ENCODE measurements at regions of chr6 and their contacts with region 1.

Region 1: GRCh38 chr6:25490018-25490801 is 161.8 kb upstream of the SCGN start:
- DNase-seq: peak; percentile 92
- ATAC-seq: peak; percentile 97
- H3K4me3 ChIP-seq: no peak overlapping the region
- H3K27ac ChIP-seq: no peak overlapping the region
- H3K4me1 ChIP-seq: peaks cover 4% of the 10 kb centered on the region; the same call in 1 of the 2 replicates
- H3K27me3 ChIP-seq: no peaks in the 10 kb centered on the region
- CTCF ChIP-seq: peak; percentile 90

Region 2: DNA sequence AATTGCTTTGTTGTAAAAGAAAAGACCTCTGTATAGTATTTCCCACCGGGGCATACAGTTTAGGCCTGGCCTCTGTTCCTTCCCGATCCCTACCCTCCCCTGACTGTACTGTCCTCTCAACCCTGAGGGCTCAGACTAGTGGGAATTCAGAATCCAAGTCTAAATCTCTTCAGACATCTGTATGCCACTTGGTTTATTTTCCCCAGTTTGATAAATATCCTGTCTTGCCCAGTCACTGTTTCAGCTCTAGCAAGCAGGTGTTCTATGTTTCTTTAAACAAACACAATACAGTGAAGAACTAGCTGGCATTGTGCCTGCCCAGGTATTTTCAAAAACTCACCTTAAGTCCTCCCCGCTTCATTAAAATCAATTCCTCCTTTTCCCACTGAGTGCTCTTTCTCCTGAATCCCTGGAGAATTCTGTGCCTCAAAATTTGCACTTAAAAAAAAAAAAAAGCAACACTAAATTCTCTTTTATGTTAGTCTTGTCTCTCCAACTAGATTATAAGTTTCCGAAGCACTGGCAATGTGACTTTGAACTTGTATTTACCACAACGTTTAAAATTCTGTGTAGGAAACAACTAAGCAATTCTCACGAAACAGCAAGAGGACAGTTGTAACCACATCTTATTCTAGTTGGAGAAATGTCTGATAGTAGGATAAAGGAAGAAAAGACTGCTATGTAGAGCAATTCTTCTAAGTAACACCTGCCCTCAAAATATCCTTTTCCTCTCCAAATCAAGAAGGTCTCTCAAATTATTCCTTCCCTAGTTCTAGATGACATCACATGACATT is 323.1 kb before region 1 on chr6:
- CTCF ChIA-PET with region 1: no interaction called
- POLR2A ChIA-PET with region 1: no interaction called
- intact Hi-C with region 1: no loop called
- DNase-seq: no peak
- ATAC-seq: no peak
- H3K4me3 ChIP-seq: no peak overlapping the region
- H3K27ac ChIP-seq: no peak overlapping the region
- H3K4me1 ChIP-seq: 0 out of 2 replicates have a peak, but pooled peaks cover 10% of the 10 kb centered on the region
- H3K27me3 ChIP-seq: no peaks in the 10 kb centered on the region
- CTCF ChIP-seq: no peak

Region 3: GRCh38 chr6:25458485-25458884 is 31.7 kb before region 1 on chr6:
- CTCF ChIA-PET with region 1: interaction called, 16 read pairs
- POLR2A ChIA-PET with region 1: no interaction called
- intact Hi-C with region 1: no loop called
- DNase-seq: peak; percentile 81
- ATAC-seq: peak; percentile 81
- H3K4me3 ChIP-seq: no peak overlapping the region
- H3K27ac ChIP-seq: no peak overlapping the region
- H3K4me1 ChIP-seq: peaks cover 23% of the 10 kb centered on the region
- H3K27me3 ChIP-seq: no peaks in the 10 kb centered on the region
- CTCF ChIP-seq: no peak

Region 4: GRCh38 chr6:25601800-25602673 is 111.8 kb after region 1 on chr6:
- CTCF ChIA-PET with region 1: no interaction called
- POLR2A ChIA-PET with region 1: no interaction called
- intact Hi-C with region 1: loop called (anchors 5 kb)
- DNase-seq: peak; percentile 70
- ATAC-seq: peak; percentile 81
- H3K4me3 ChIP-seq: no peak overlapping the region
- H3K27ac ChIP-seq: no peak overlapping the region
- H3K4me1 ChIP-seq: peaks cover 7% of the 10 kb centered on the region; the same call in 1 of the 2 replicates
- H3K27me3 ChIP-seq: no peaks in the 10 kb centered on the region
- CTCF ChIP-seq: peak; percentile 87

Region 5: DNA sequence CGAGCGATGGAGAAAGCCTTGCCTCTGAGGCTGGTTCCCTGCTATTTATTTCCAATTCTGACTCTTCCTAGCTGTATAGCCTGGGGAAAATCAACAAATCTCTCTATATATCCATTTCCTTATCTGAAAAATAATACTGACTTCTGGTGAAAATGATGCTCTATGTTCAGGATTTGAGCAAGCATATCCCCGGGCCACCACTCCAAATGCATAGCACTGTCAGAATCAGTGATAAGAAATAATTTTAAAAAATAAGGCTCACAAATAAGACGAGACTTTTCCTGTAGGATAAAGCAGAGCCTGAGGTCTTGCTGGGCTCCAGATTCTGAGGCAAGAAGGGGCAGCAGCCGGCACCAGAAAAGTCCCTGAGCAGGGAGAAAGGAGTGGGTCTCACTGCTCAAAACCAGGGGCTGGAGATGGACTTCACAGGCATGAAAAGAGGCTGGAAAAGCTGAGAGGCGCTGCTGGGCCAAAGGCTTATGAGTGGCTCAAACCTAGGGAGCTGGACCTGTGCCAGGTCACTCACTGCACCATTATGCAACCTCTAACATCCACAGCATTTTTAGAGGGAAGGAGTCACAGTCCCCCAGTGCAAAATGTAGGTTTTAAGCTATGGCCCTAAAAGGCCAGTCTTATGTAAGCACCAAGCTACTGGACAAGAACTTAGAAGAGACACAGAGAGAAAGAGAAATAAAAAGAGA is 216.3 kb after region 1 on chr6:
- CTCF ChIA-PET with region 1: no interaction called
- POLR2A ChIA-PET with region 1: no interaction called
- intact Hi-C with region 1: no loop called
- DNase-seq: peak; percentile 14
- ATAC-seq: no peak
- H3K4me3 ChIP-seq: no peak overlapping the region
- H3K27ac ChIP-seq: no peak overlapping the region
- H3K4me1 ChIP-seq: no peaks in the 10 kb centered on the region
- H3K27me3 ChIP-seq: peaks cover 37% of the 10 kb centered on the region
- CTCF ChIP-seq: no peak